Caco-2 (cell line): ENCODE measurements at regions of chr5 and their contacts with region 1.

Region 1: GRCh38 chr5:181181650-181182565 is 23.1 kb downstream of the TRIM7 start:
- DNase-seq: peak; percentile 78 to 79
- H3K4me3 ChIP-seq: no peak overlapping the region
- H3K4me3 Mint-ChIP-seq: peak overlapping the region; percentile 53
- H3K27ac Mint-ChIP-seq: no peak overlapping the region
- H3K4me1 ChIP-seq: no peaks in the 10 kb centered on the region; the same call in 1 of the 2 replicates
- H3K4me1 Mint-ChIP-seq: no peaks in the 10 kb centered on the region
- H3K27me3 ChIP-seq: no peaks in the 10 kb centered on the region
- H3K27me3 Mint-ChIP-seq: no peaks in the 10 kb centered on the region
- CTCF ChIP-seq: peak; percentile 63 to 84

Region 2: DNA sequence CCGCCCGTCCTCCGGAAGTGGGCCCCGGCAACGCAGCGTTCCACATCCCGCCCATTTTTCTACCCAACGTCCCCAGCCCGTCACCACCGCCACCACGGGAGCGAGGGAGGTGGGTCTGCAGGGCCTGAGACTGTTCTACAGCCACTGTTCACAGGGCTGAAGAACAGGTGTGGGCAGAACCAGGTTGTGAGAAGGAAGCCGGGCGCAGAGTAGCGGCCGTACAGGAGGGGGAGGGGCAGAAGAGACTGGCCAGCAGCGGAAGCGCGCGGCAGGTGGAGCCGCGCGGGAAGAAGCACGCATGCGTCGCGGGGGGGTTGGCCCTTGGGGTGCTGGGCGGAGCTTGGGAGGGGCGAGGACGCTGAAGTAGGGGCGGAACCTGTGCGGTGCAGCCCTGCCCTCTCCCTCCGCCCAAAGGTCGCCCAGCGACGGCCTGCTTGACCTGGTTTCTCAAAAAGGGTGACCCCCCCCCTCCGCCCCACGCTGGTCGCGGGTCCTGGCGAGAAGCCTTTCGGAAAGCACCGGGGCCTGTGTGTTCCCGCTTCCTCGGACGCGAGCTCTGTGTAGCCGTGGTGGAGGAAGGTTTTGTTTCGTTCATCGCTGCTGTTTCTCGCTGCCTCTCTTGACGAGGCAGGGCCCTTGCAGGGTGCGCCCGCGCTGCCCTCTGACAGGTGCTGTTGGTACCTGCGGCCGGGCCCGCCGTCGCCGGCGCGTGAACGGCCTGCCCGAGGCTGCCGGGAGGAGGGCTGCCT is 371.5 kb before region 1 on chr5:
- CTCF ChIA-PET with region 1: interaction called, 3 read pairs
- POLR2A ChIA-PET with region 1: interaction called, 3 read pairs
- intact Hi-C with region 1: loop called (anchors 10 kb)
- DNase-seq: peak; percentile 96 to 97
- H3K4me3 ChIP-seq: peak overlapping the region; percentile 64
- H3K4me3 Mint-ChIP-seq: peak overlapping the region; percentile 84
- H3K27ac Mint-ChIP-seq: peak overlapping the region; percentile 66
- H3K4me1 ChIP-seq: peaks cover 42% of the 10 kb centered on the region
- H3K4me1 Mint-ChIP-seq: peaks cover 62% of the 10 kb centered on the region
- H3K27me3 ChIP-seq: no peaks in the 10 kb centered on the region
- H3K27me3 Mint-ChIP-seq: no peaks in the 10 kb centered on the region
- CTCF ChIP-seq: no peak

Region 3: DNA sequence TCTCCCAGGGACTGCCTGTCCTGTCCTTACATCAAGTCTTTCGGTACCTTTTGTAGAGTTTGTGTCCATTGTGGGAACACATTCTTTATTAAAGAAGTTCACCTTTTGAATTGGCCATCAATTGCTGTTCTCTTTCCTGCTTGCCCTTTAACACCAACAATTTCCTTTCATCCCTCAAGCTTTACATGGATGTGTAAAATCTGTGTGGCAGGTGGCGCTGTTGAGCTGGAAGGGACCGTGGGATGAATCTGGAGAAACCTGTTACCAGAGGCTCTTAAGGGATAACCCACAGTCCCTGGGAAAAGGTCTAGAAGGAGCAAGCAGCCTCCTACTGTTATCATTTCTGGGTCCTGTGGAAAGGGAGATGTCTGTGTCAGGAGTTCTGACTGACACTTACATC is 312.9 kb before region 1 on chr5:
- CTCF ChIA-PET with region 1: no interaction called
- POLR2A ChIA-PET with region 1: no interaction called
- intact Hi-C with region 1: loop called (anchors 1 kb)
- DNase-seq: peak; percentile 90
- H3K4me3 ChIP-seq: no peak overlapping the region
- H3K4me3 Mint-ChIP-seq: no peak overlapping the region
- H3K27ac Mint-ChIP-seq: no peak overlapping the region
- H3K4me1 ChIP-seq: peaks cover 6% of the 10 kb centered on the region; the same call in 1 of the 2 replicates
- H3K4me1 Mint-ChIP-seq: peaks cover 19% of the 10 kb centered on the region
- H3K27me3 ChIP-seq: no peaks in the 10 kb centered on the region
- H3K27me3 Mint-ChIP-seq: no peaks in the 10 kb centered on the region
- CTCF ChIP-seq: peak; percentile 90 to 96

Region 4: DNA sequence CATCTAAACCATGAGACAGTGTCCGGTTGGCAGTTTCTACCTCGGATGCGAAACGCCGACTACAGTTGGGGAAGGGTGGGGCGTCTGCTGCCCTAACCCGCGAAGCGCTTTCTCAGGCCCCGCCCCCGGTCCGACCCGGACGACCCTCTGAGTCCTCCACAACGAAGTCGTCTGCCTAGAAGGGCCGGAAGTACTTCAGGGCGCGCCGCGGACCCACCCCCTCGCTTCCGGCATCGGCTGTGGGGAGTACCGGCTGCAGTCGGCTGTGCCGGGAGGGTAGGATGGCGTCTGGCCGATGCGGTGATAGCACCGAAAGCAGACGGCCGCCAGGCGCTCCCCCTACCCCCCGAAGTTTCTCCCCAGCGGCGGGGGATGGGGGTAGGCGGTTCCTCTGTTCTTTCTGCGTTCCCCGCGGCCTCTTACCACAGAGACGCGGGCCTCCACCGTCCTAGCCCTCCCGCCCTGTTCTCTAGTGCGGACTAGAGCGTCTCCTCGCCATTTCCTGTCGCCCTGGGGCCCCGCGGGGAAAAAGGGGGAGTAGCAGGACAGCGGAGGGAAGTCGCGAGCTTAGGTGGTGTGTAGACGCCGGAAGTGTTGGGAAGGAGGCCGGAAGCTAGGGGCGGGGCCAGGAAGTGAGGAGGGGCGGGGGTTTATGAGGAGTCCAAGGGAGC is 41.3 kb after region 1 on chr5 and contains the start of gene TRIM41:
- CTCF ChIA-PET with region 1: interaction called, 11 read pairs
- POLR2A ChIA-PET with region 1: interaction called, 7 read pairs
- intact Hi-C with region 1: loop called (anchors 1 kb)
- DNase-seq: peak; percentile 99
- H3K4me3 ChIP-seq: peak within 1 kb of the TSS; percentile 93
- H3K4me3 Mint-ChIP-seq: peak within 1 kb of the TSS; percentile 86
- H3K27ac Mint-ChIP-seq: peak within 1 kb of the TSS; percentile 99
- H3K4me1 ChIP-seq: no peaks in the 10 kb centered on the region
- H3K4me1 Mint-ChIP-seq: peaks cover 35% of the 10 kb centered on the region
- H3K27me3 ChIP-seq: no peaks in the 10 kb centered on the region
- H3K27me3 Mint-ChIP-seq: peaks cover 6% of the 10 kb centered on the region
- CTCF ChIP-seq: peak in 1 of 2 experiments; percentile 5
- total RNA-seq, gene TRIM41: 23.6 and 28.7 TPM in 2 replicates

Region 5: GRCh38 chr5:181260387-181261319 is 78.7 kb after region 1 on chr5 and contains the start of gene TRIM52:
- CTCF ChIA-PET with region 1: no interaction called
- POLR2A ChIA-PET with region 1: interaction called, 11 read pairs
- intact Hi-C with region 1: loop called (anchors 5 kb)
- DNase-seq: peak; percentile 91 to 95
- H3K4me3 ChIP-seq: peak within 1 kb of the TSS; percentile 60
- H3K4me3 Mint-ChIP-seq: peak within 1 kb of the TSS; percentile 80
- H3K27ac Mint-ChIP-seq: peak within 1 kb of the TSS; percentile 69
- H3K4me1 ChIP-seq: peaks cover 11% of the 10 kb centered on the region; the same call in 1 of the 2 replicates
- H3K4me1 Mint-ChIP-seq: peaks cover 15% of the 10 kb centered on the region
- H3K27me3 ChIP-seq: no peaks in the 10 kb centered on the region
- H3K27me3 Mint-ChIP-seq: no peaks in the 10 kb centered on the region
- CTCF ChIP-seq: no peak
- total RNA-seq, gene TRIM52: 11.9 and 13.6 TPM in 2 replicates